ENCODE measurements at regions of chr10 and their contacts with region 1.

Region 1: DNA sequence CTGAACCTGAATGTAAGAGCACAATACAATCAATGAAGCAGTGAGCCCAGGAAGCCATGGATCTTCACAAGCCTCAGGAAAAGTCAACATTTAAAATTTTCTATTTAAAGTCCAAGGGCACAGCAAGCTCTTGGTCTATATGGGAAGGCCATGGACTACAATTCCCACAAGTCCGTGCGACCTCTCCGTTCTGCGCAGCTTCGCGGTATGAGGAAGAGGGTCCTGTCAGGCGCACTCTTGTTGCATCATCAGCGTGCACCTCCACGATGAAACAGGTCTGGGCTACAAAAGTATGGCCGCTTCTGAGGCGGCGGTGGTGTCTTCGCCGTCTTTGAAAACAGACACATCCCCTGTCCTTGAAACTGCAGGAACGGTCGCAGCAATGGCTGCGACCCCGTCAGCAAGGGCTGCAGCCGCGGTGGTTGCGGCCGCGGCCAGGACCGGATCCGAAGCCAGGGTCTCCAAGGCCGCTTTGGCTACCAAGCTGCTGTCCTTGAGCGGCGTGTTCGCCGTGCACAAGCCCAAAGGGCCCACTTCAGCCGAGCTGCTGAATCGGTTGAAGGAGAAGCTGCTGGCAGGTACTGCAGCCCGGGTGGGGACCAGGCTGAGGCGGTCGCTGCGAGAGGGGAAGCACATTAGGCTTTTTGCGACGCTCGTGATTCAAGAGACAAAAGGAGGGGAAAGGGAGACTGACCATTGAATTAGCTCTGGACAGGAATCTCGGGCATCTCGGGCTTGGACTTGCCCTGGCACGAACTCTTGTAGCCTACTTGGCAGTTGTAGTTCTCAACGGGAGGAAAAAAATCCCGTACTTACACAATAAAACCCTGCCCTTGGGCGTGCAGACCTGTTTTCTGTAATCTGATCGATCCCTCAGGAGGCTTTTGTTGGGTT is at the start of gene TRUB1:
- DNase-seq: peak; percentile 96
- H3K4me3 Mint-ChIP-seq: peak within 1 kb of the TSS; percentile 96
- H3K27ac Mint-ChIP-seq: peak within 1 kb of the TSS; percentile 97
- H3K4me1 Mint-ChIP-seq: peaks cover 20% of the 10 kb centered on the region
- H3K27me3 Mint-ChIP-seq: no peaks in the 10 kb centered on the region
- CTCF ChIP-seq: no peak
- total RNA-seq, gene TRUB1: 23.4 and 29.2 TPM in 2 replicates

Region 2: DNA sequence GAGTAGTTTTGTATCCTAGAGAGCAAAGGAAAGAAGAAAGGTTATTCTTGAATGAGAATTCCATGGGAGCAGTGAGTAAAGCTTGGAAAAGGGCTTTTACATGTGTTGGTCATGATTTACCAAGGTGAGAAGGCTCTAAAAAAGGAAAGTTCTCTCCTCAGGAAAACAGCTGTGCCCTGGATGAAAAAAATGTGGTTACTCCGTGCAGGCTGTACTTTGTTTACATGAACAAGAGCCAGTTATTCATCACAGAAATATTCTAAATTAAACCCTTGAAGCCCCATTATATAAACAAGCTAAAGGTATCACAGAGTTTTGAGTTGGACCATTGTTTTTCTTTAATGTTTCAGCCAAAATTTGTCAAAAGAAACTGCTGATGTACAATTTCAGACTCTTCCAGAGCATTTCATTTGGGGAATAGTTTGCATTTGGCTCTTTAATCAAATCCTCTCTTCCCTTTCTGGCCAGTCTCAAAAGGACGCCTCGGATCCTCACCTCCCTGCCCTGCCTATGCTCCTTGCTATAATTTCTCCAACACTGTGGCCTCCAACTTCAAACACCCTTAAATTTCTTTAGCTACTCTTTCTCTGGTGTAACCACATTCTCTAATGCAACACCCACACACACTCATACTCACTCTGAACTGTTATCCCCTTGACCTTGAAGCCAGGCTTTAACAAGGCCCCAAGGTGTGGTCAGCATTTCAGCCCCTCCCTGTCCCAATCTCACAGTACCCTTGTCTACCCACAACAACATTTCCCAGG is 581.3 kb before region 1 on chr10:
- CTCF ChIA-PET with region 1: no interaction called
- POLR2A ChIA-PET with region 1: no interaction called
- intact Hi-C with region 1: no loop called
- DNase-seq: peak; percentile 52
- H3K4me3 Mint-ChIP-seq: peak overlapping the region; percentile 2
- H3K27ac Mint-ChIP-seq: peak overlapping the region; percentile 43
- H3K4me1 Mint-ChIP-seq: peaks cover 12% of the 10 kb centered on the region
- H3K27me3 Mint-ChIP-seq: no peaks in the 10 kb centered on the region
- CTCF ChIP-seq: no peak

Region 3: DNA sequence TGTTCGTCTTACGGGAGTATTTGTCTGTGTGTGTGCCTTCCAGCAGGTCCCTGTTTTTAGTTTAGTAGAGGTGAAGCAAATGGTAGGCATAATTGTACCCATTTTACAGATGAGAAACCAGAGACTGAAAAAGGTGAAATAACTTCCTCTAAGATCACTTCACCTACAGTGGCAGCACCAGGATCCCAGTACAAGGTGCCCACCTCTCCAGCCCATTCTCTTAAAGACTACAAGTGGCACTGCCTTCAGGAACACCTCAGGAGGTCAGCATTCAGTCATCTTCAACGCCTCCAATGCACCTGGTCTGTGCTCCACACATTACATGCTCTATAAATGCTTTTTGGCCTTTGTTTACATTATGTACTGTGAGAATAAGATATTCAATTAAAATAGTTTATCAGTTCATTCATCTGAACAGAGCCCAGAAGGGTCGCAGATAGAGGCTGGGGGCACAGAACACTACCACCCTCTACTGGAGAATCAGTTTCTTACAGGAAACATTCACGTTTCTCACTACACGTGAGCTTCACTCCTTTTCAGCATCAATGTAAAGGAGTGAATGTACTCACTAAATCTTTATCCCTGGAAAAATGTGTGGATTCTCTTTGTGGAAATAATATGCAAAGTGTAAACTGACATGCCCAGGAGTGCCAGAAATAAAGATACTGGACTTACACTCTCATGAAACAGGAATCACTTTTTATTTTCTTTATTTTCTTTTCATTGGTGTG is 234.7 kb before region 1 on chr10:
- CTCF ChIA-PET with region 1: no interaction called
- POLR2A ChIA-PET with region 1: no interaction called
- intact Hi-C with region 1: no loop called
- DNase-seq: peak; percentile 48
- H3K4me3 Mint-ChIP-seq: no peak overlapping the region
- H3K27ac Mint-ChIP-seq: no peak overlapping the region
- H3K4me1 Mint-ChIP-seq: peaks cover 19% of the 10 kb centered on the region
- H3K27me3 Mint-ChIP-seq: no peaks in the 10 kb centered on the region
- CTCF ChIP-seq: peak; percentile 81

Region 4: GRCh38 chr10:114920470-114920869 is 17.7 kb before region 1 on chr10:
- CTCF ChIA-PET with region 1: interaction called, 3 read pairs
- POLR2A ChIA-PET with region 1: interaction called, 17 read pairs
- intact Hi-C with region 1: no loop called
- DNase-seq: peak; percentile 57
- H3K4me3 Mint-ChIP-seq: no peak overlapping the region
- H3K27ac Mint-ChIP-seq: no peak overlapping the region
- H3K4me1 Mint-ChIP-seq: peaks cover 17% of the 10 kb centered on the region
- H3K27me3 Mint-ChIP-seq: no peaks in the 10 kb centered on the region
- CTCF ChIP-seq: no peak

Region 5: GRCh38 chr10:114925587-114926586 is 12.3 kb before region 1 on chr10:
- CTCF ChIA-PET with region 1: interaction called, 3 read pairs
- POLR2A ChIA-PET with region 1: interaction called, 17 read pairs
- intact Hi-C with region 1: no loop called
- DNase-seq: peak; percentile 29
- H3K4me3 Mint-ChIP-seq: no peak overlapping the region
- H3K27ac Mint-ChIP-seq: no peak overlapping the region
- H3K4me1 Mint-ChIP-seq: peaks cover 9% of the 10 kb centered on the region
- H3K27me3 Mint-ChIP-seq: no peaks in the 10 kb centered on the region
- CTCF ChIP-seq: no peak

Region 6: DNA sequence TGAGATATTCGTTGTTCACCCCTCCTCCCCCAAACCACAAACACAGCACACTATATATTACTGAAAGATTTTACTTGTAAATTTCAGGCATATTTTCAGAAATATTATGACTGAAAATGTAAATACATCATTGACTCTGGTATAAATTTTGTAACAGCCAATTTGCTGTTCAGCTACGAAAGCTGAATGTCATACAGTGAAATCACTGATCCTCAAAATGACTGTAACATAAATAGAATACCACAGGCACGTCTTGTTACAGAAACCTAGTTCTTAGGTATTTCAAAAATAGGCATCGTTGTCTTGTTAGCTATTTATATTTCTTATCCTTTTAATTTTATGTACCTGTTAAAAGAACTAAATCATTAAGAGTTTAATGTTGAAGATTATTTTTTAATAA is 14.8 kb after region 1 on chr10:
- CTCF ChIA-PET with region 1: interaction called, 6 read pairs
- POLR2A ChIA-PET with region 1: interaction called, 24 read pairs
- intact Hi-C with region 1: no loop called
- DNase-seq: no peak
- H3K4me3 Mint-ChIP-seq: no peak overlapping the region
- H3K27ac Mint-ChIP-seq: no peak overlapping the region
- H3K4me1 Mint-ChIP-seq: peaks cover 8% of the 10 kb centered on the region
- H3K27me3 Mint-ChIP-seq: no peaks in the 10 kb centered on the region
- CTCF ChIP-seq: no peak